Heart right ventricle (tissue), 16 donors: ENCODE measurements at regions of chr17 and their contacts with region 1.

Region 1: GRCh38 chr17:43024407-43025289 is at the start of gene RND2:
- DNase-seq: peak; percentile 77 to 91
- ATAC-seq: peak; percentile 58 to 81 (median 70)
- H3K4me3 ChIP-seq: peak within 1 kb of the TSS; percentile 25 to 80 (median 60)
- H3K27ac ChIP-seq: peak within 1 kb of the TSS in 8 of 10 donors; percentile 7 to 79 (median 54)
- H3K4me1 ChIP-seq: peaks cover 3 to 38% (median 27%) of the 10 kb centered on the region in 9 donors
- H3K27me3 ChIP-seq: no peaks in the 10 kb centered on the region
- CTCF ChIP-seq: peak; percentile 28 to 84 (median 69)
- total RNA-seq, gene RND2: 0.16 to 2.3 (median 0.51) TPM

Region 2: DNA sequence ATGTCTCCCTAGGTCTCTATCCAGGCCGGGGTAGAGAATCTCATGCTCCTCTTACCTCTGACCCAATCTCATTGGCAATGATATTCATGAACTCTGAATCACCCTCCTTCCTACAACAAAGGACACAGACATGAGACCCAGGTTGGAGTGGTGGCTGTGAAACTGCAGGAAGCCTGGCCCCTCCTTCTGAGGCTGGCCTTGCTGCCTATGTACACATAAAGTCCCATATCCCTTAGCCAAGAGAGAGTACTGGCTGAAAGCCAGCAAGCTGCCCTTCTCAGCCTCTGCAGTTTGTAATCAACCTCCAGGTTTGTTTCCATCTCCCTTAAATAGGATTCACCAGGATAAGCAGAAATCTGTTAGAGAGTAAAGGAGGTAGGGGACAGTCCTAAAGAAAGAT is 71.0 kb before region 1 on chr17:
- intact Hi-C with region 1: no loop called
- DNase-seq: no peak
- ATAC-seq: peak in 3 of 8 donors; percentile 29 to 43 (median 37)
- H3K4me3 ChIP-seq: no peak overlapping the region
- H3K27ac ChIP-seq: no peak overlapping the region
- H3K4me1 ChIP-seq: no peaks in the 10 kb centered on the region
- H3K27me3 ChIP-seq: no peaks in the 10 kb centered on the region
- CTCF ChIP-seq: no peak

Region 3: DNA sequence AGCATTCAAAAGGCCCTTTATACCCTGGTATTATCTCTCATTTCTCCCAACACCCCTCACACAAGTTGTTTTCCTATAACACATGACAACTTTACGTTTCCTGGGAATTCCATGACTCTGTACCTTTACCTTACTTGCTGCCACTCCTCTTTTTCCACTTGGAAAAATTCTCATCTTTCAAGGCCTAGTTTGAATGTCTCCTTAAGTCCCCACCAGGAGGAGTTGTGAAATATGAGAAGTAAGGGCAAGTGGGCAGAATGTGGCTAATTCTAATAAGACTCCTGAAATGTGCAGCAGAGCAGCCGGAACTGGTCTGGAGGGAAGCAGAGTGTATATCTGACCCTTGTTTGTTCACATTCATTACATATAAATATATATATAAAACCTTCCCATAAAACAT is 60.8 kb after region 1 on chr17:
- intact Hi-C with region 1: loop called in 1 of 10 experiments (anchors 5 kb)
- DNase-seq: no peak
- ATAC-seq: no peak
- H3K4me3 ChIP-seq: no peak overlapping the region
- H3K27ac ChIP-seq: peak overlapping the region in 4 of 10 donors; percentile 2 to 69 (median 56)
- H3K4me1 ChIP-seq: peaks cover 0 to 15% (median 0%) of the 10 kb centered on the region in 9 donors
- H3K27me3 ChIP-seq: no peaks in the 10 kb centered on the region
- CTCF ChIP-seq: no peak

Region 4: DNA sequence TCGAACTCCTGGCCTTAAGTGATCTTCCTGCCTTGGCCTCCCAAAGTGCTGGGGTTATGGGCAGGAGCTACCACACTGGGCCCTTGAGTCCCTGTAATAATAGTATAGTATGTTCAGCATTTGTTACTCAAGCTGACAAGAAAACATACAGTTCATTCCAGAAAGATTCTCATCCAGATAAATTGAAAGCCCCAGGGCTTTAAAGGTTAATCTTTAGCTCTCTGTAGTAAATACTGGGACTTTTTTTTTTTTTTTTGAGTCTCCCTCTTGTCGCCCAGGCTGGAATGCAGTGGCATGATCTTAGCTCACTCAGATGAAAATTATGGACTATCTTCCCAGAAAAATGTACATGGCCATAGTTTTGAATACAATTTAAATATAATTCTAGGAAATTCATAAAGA is 89.5 kb after region 1 on chr17:
- intact Hi-C with region 1: no loop called
- DNase-seq: no peak
- ATAC-seq: no peak
- H3K4me3 ChIP-seq: no peak overlapping the region
- H3K27ac ChIP-seq: no peak overlapping the region
- H3K4me1 ChIP-seq: no peaks in the 10 kb centered on the region
- H3K27me3 ChIP-seq: no peaks in the 10 kb centered on the region
- CTCF ChIP-seq: no peak

Region 5: GRCh38 chr17:43170766-43171585 is 146.3 kb after region 1 on chr17 and contains the start of gene NBR1:
- intact Hi-C with region 1: loop called in 8 of 10 experiments (anchors 5 to 10 kb)
- DNase-seq: peak; percentile 90 to 96
- ATAC-seq: peak; percentile 92 to 95 (median 93)
- H3K4me3 ChIP-seq: peak within 1 kb of the TSS; percentile 49 to 83 (median 73)
- H3K27ac ChIP-seq: peak within 1 kb of the TSS; percentile 91 to 97 (median 96)
- H3K4me1 ChIP-seq: peaks cover 2 to 56% (median 54%) of the 10 kb centered on the region in 9 donors
- H3K27me3 ChIP-seq: no peaks in the 10 kb centered on the region
- CTCF ChIP-seq: peak in 7 of 9 donors; percentile 8 to 48 (median 30)
- total RNA-seq, gene NBR1: 80.3 to 120 (median 107) TPM

Region 6: GRCh38 chr17:43330876-43331639 is 306.4 kb after region 1 on chr17:
- intact Hi-C with region 1: loop called in 3 of 10 experiments (anchors 5 to 10 kb)
- DNase-seq: no peak
- ATAC-seq: no peak
- H3K4me3 ChIP-seq: no peak overlapping the region
- H3K27ac ChIP-seq: no peak overlapping the region
- H3K4me1 ChIP-seq: peaks cover 0 to 12% (median 9%) of the 10 kb centered on the region in 9 donors
- H3K27me3 ChIP-seq: no peaks in the 10 kb centered on the region
- CTCF ChIP-seq: no peak

Region 7: GRCh38 chr17:43360739-43361505 is 336.3 kb after region 1 on chr17:
- intact Hi-C with region 1: loop called in 1 of 10 experiments (anchors 10 kb)
- DNase-seq: peak; percentile 80 to 94
- ATAC-seq: peak; percentile 86 to 93 (median 90)
- H3K4me3 ChIP-seq: peak overlapping the region; percentile 40 to 72 (median 62)
- H3K27ac ChIP-seq: peak overlapping the region; percentile 75 to 99 (median 94)
- H3K4me1 ChIP-seq: peaks cover 0 to 20% (median 18%) of the 10 kb centered on the region in 9 donors
- H3K27me3 ChIP-seq: no peaks in the 10 kb centered on the region
- CTCF ChIP-seq: no peak